Activated CD8-positive, alpha-beta T cell treated with anti-CD3 and anti-CD28 coated beads for 36 hours (primary cell): ENCODE measurements at regions of chr15 and their contacts with region 1.

Region 1: GRCh38 chr15:42056934-42057779 is 36.3 kb upstream of the PLA2G4E start:
- DNase-seq: peak; percentile 70
- ATAC-seq: peak; percentile 86
- H3K4me3 Mint-ChIP-seq: peak overlapping the region; percentile 20
- H3K27ac Mint-ChIP-seq: no peak overlapping the region
- H3K4me1 Mint-ChIP-seq: peaks cover 7% of the 10 kb centered on the region
- H3K27me3 Mint-ChIP-seq: peaks cover 26% of the 10 kb centered on the region
- CTCF ChIP-seq: peak; percentile 63

Region 2: DNA sequence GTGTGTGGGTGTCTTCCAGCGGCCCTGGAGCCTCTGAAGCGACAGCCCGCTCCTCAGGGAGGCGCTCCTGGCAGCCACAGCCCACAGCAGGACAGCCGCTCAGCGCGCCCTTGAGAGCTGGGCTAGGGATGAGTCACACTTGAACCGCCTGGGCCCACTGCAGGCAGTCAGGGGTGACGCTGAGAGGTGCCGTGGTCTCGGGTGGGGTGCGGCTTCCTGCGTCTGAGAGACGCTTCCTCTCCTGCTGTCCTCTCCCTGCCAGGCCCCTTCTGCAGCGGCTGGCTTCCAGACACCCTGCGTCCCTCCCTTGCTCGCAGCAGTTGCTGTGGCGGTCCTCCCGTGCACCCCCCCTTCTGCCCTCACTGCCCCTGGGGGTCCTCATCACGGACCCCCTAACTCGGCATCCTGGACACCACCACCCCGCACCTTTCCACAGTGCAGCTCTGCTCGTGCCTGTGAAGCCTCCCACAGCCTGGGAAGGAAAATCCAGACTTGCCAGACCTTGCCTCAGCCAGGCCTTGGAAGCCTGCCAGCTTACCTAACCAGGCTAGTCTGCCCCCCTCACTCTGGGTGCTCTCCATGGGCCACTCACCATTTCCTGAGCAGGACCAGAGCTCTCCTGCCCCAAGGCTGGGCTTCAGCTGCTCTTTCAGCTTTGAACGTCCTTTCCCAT is 162.2 kb before region 1 on chr15:
- CTCF ChIA-PET with region 1: no interaction called
- POLR2A ChIA-PET with region 1: no interaction called
- intact Hi-C with region 1: no loop called
- DNase-seq: peak; percentile 89
- ATAC-seq: peak; percentile 99
- H3K4me3 Mint-ChIP-seq: peak overlapping the region; percentile 38
- H3K27ac Mint-ChIP-seq: peak overlapping the region; percentile 67
- H3K4me1 Mint-ChIP-seq: peaks cover 23% of the 10 kb centered on the region
- H3K27me3 Mint-ChIP-seq: no peaks in the 10 kb centered on the region
- CTCF ChIP-seq: no peak

Region 3: GRCh38 chr15:41980654-41981323 is 76.4 kb before region 1 on chr15:
- CTCF ChIA-PET with region 1: interaction called, 97 read pairs
- POLR2A ChIA-PET with region 1: no interaction called
- intact Hi-C with region 1: no loop called
- DNase-seq: no peak
- ATAC-seq: no peak
- H3K4me3 Mint-ChIP-seq: no peak overlapping the region
- H3K27ac Mint-ChIP-seq: no peak overlapping the region
- H3K4me1 Mint-ChIP-seq: no peaks in the 10 kb centered on the region
- H3K27me3 Mint-ChIP-seq: peaks cover under 1% of the 10 kb centered on the region
- CTCF ChIP-seq: no peak

Region 4: GRCh38 chr15:42137431-42138261 is 80.5 kb after region 1 on chr15:
- CTCF ChIA-PET with region 1: interaction called, 3 read pairs
- POLR2A ChIA-PET with region 1: no interaction called
- intact Hi-C with region 1: loop called (anchors 10 kb)
- DNase-seq: peak; percentile 41
- ATAC-seq: no peak
- H3K4me3 Mint-ChIP-seq: no peak overlapping the region
- H3K27ac Mint-ChIP-seq: no peak overlapping the region
- H3K4me1 Mint-ChIP-seq: no peaks in the 10 kb centered on the region
- H3K27me3 Mint-ChIP-seq: no peaks in the 10 kb centered on the region
- CTCF ChIP-seq: peak; percentile 73